ENCODE measurements at regions of chr12 and their contacts with region 1.

Region 1: GRCh38 chr12:121917979-121918678 is at the start of gene CFAP251:
- DNase-seq: peak; percentile 98
- ATAC-seq: peak; percentile 96
- H3K4me3 Mint-ChIP-seq: peak within 1 kb of the TSS; percentile 70
- H3K27ac Mint-ChIP-seq: peak within 1 kb of the TSS; percentile 88
- H3K4me1 Mint-ChIP-seq: peaks cover 10% of the 10 kb centered on the region
- H3K27me3 Mint-ChIP-seq: no peaks in the 10 kb centered on the region; the same call in 1 of the 2 replicates
- CTCF ChIP-seq: peak; percentile 61
- total RNA-seq, gene CFAP251: 2.9 to 3.1 TPM (median 3.0 TPM) in 3 replicates

Region 2: DNA sequence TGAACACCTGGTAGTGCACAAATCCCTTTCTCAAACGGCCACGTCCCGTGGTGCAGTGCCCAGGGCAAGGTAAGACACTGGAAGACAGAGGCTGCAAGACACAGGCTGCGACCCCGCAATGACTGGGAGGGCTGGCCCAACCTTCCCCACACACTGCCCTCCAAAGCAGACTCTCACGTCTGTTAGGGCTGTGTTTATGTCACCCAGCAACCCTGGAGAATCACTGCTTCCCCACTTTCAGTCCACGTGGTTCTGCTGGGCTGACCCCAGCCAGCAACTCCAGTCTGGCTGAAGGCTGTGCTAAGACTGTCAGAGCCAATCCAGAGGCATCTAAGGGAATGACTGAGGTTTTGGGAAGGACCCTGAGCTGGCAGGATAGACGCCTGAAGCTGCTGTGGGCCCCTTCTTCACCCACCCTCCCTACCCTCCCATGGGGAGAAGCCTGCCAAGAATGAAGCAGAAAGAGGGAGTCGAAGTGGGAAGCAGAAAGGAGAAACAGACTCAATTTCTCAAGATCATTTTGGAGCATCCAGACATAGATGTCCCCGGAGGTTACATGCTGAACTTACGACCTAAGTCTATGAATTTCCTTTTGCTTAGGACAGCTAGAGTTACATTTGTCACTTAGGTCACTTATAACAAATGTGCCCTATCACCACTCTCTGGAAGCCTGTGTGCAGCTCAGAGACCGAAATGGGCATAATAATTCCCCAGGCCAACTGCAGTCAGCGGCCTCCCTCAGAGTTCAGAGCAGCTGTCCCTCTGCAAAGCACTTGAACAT is 349.0 kb before region 1 on chr12:
- CTCF ChIA-PET with region 1: no interaction called
- POLR2A ChIA-PET with region 1: no interaction called
- DNase-seq: no peak
- ATAC-seq: peak; percentile 43
- H3K4me3 Mint-ChIP-seq: no peak overlapping the region
- H3K27ac Mint-ChIP-seq: peak overlapping the region; percentile 78; the same call in 1 of the 2 replicates
- H3K4me1 Mint-ChIP-seq: peaks cover 8% of the 10 kb centered on the region
- H3K27me3 Mint-ChIP-seq: no peaks in the 10 kb centered on the region
- CTCF ChIP-seq: no peak

Region 3: GRCh38 chr12:121811434-121812319 is 106.5 kb before region 1 on chr12:
- CTCF ChIA-PET with region 1: interaction called, 16 read pairs
- POLR2A ChIA-PET with region 1: no interaction called
- DNase-seq: peak; percentile 80
- ATAC-seq: peak; percentile 77
- H3K4me3 Mint-ChIP-seq: peak overlapping the region; percentile 87
- H3K27ac Mint-ChIP-seq: peak overlapping the region; percentile 86
- H3K4me1 Mint-ChIP-seq: peaks cover 32% of the 10 kb centered on the region
- H3K27me3 Mint-ChIP-seq: no peaks in the 10 kb centered on the region
- CTCF ChIP-seq: peak; percentile 98

Region 4: GRCh38 chr12:121894633-121895032 is 23.5 kb before region 1 on chr12:
- CTCF ChIA-PET with region 1: interaction called, 13 read pairs
- POLR2A ChIA-PET with region 1: no interaction called
- DNase-seq: peak; percentile 30
- ATAC-seq: peak; percentile 86
- H3K4me3 Mint-ChIP-seq: no peak overlapping the region
- H3K27ac Mint-ChIP-seq: no peak overlapping the region
- H3K4me1 Mint-ChIP-seq: peaks cover 14% of the 10 kb centered on the region
- H3K27me3 Mint-ChIP-seq: peaks cover 8% of the 10 kb centered on the region
- CTCF ChIP-seq: 0 out of 2 replicates have a peak, but pooled peaks have one; percentile 18

Region 5: GRCh38 chr12:121939186-121939585 is 21.1 kb after region 1 on chr12:
- CTCF ChIA-PET with region 1: interaction called, 12 read pairs
- POLR2A ChIA-PET with region 1: no interaction called
- DNase-seq: no peak
- ATAC-seq: no peak
- H3K4me3 Mint-ChIP-seq: no peak overlapping the region
- H3K27ac Mint-ChIP-seq: no peak overlapping the region
- H3K4me1 Mint-ChIP-seq: peaks cover 8% of the 10 kb centered on the region
- H3K27me3 Mint-ChIP-seq: no peaks in the 10 kb centered on the region
- CTCF ChIP-seq: no peak

Region 6: DNA sequence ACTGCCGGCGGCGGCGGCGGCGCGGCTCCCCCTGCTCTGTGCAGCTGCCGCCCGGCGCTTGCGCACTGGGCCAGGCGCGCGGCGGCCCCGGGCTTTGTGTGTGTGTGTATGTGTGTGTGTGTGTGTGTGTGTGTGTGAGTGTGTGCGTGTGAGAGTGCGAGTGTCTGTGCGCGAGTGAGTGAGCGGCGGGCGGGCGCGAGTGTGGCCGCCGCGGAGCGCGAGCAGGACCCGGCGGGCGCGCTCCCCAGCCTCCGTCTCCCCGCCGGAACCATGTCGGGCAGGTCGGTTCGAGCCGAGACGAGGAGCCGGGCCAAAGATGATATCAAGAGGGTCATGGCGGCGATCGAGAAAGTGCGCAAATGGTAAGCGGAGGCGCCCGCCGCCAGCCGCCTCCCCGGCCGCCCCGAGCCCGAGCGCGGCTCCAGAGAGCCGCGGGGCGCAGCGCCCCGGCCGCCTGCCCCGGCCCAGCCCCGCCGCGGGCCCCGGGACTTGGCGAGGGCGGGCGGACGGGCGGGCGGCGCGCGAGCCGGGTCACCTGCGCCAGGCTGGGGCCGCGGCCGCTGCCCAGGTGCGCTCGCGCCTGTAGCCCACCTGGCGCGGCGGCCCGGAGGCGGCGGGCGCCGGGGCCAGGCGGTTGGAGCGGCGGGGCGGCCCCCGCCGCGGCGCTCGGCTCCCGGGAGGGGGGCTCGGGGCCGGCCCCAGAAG is 103.8 kb after region 1 on chr12 and contains the start of gene BCL7A:
- CTCF ChIA-PET with region 1: interaction called, 25 read pairs
- POLR2A ChIA-PET with region 1: interaction called, 4 read pairs
- DNase-seq: peak; percentile 52
- ATAC-seq: peak; percentile 66
- H3K4me3 Mint-ChIP-seq: peak within 1 kb of the TSS; percentile 88
- H3K27ac Mint-ChIP-seq: no peak within 1 kb of the TSS
- H3K4me1 Mint-ChIP-seq: peaks cover 18% of the 10 kb centered on the region
- H3K27me3 Mint-ChIP-seq: peaks cover 37% of the 10 kb centered on the region
- CTCF ChIP-seq: no peak
- total RNA-seq, gene BCL7A: 14.6 to 19.7 TPM (median 15.8 TPM) in 3 replicates

Region 7: DNA sequence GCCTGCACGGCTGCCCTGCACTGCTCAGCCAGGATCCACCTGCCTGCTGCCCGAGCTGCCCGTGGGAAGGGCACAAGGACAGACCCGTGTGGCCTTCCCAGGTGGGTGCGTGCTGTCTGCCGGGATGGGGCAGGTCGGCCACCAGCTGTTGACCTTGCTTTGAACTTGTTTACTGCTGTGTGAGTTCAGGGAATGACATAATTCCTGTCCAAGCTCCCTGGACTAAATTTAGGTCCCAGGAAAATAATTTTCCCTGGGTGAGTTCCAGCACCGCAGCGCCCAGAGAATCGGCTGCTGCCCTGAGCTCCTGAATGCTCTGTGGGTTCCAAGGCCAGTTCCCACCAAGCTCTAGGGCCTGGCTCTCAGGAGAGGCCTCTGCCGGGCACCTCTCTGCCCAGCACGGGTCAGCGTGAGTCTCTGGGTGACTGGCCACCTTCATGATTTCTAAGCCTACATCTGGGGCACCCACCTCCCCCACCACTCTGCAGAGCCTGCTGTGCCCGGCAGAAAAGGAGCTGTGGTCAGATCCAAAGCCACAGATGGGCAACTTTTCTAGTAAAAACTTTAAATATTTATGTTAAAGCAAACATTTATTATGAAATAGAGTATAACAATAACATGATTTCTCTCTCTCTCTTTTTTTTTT is 133.2 kb after region 1 on chr12:
- CTCF ChIA-PET with region 1: interaction called, 10 read pairs
- POLR2A ChIA-PET with region 1: interaction called, 3 read pairs
- DNase-seq: no peak
- ATAC-seq: no peak
- H3K4me3 Mint-ChIP-seq: no peak overlapping the region
- H3K27ac Mint-ChIP-seq: no peak overlapping the region
- H3K4me1 Mint-ChIP-seq: peaks cover 4% of the 10 kb centered on the region; the same call in 1 of the 2 replicates
- H3K27me3 Mint-ChIP-seq: no peaks in the 10 kb centered on the region
- CTCF ChIP-seq: no peak

Region 8: DNA sequence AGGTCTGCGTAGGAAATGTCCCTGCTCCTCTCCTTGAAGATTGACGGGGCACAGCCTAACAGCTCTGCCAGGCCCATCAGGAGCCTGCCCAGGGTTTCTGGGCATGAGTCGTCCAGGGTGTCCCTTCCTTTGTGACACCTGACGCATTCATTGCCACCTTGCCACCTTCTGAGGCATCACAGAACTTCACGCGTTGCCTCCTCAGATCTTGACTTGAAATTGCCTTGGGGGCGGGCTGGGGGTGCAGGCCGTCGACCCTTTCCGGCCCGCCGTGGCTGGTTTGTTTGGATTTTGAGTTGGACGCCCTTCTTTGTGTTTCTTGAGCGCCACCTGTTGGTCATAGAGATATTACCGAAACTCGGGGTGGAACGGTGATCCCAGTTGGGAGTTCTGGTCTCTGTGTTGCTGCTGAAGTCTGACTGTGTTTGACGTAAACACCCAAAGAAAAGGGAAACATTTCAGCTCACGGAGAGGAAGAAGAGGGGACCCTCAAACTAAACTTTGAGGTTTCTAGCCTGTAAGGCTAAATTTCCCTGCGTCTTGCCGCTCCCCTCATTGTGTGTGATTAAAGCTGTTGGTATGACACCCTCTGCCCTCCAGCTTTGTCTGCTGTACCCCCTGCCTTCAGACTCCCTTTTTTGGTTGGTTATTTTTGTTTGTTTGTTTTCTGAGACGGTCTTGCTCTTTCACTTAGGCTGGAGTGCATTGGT is 205.1 kb after region 1 on chr12:
- CTCF ChIA-PET with region 1: interaction called, 18 read pairs
- POLR2A ChIA-PET with region 1: no interaction called
- DNase-seq: peak; percentile 86
- ATAC-seq: peak; percentile 51
- H3K4me3 Mint-ChIP-seq: peak overlapping the region; percentile 28; the same call in 1 of the 2 replicates
- H3K27ac Mint-ChIP-seq: peak overlapping the region; percentile 76
- H3K4me1 Mint-ChIP-seq: peaks cover 23% of the 10 kb centered on the region
- H3K27me3 Mint-ChIP-seq: no peaks in the 10 kb centered on the region
- CTCF ChIP-seq: peak; percentile 79